ENCODE measurements at regions of chr20 and their contacts with region 1.

Region 1: DNA sequence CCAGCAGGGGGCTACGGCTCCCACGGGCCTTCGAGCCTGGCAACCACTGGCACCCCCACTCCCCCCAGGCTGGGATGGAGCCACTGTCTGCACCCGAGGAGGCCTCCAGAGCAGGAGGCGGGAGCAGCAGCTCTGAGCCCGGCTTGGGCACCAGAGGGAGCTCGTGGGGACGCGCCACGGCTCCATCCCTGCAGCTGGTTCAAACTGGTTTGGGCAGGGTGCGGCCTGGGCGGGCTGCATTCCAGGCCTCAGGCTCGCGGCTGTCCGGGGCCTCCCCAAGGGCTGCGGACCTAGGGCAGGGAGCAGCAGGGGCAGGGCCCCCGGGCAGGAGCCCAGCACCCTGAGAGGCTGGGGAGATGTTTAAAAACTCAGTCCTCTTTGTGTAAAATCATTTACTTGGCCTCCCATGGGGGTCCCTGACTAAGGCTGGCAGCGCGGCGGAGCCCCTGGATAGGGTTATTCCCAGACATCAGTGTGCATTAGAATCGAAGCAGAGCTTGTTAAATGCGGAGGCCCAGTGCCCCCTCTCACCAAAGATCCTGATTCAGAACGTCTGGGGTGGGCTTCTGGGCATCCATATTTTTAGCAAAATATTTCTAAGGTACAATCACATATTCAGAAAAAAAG is 4.1 kb upstream of the BCAS4 start:
- DNase-seq: peak; percentile 78 to 93
- H3K4me3 ChIP-seq: peak overlapping the region in 2 of 4 experiments; percentile 1 to 29; a peak in 2 of 8 replicates
- H3K27ac ChIP-seq: 0 out of 2 replicates have a peak overlapping the region, but pooled peaks have one; percentile 32
- H3K4me1 ChIP-seq: peaks cover 2 to 4% (median 3%) of the 10 kb centered on the region in 4 experiments; a peak in 5 of 7 replicates
- H3K27me3 ChIP-seq: no peaks in the 10 kb centered on the region; a peak in 1 of 7 replicates
- CTCF ChIP-seq: peak; percentile 69 to 84 (median 82)
- EP300 ChIP-seq: peak in 1 of 2 experiments; percentile 85; a peak in 1 of 3 replicates
- POLR2A ChIP-seq: peak in 1 of 2 experiments; percentile 74; a peak in 2 of 3 replicates
- RAD21 ChIP-seq: peak; percentile 28 to 54

Region 2: DNA sequence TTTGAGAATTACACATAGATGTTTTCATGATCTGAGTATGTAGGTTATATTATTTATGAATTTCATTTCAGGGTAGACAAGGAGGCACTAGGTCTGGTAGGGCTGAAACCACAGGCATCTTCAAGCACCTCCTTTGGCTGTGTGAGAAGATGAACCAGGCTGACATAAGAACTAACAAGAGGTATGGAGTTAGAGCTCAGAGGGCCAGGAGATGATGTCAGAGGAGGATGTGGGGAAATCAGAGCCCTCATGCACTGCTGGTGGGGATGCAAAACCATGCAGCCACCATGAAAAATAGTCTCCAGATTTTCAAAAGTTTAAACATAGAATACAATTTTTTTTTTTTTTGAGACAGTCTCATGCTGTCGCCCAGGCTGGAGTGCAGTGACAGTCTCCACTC is 85.8 kb before region 1 on chr20:
- CTCF ChIA-PET with region 1: no interaction called
- POLR2A ChIA-PET with region 1: no interaction called
- DNase-seq: no peak
- H3K4me3 ChIP-seq: no peak overlapping the region
- H3K27ac ChIP-seq: no peak overlapping the region
- H3K4me1 ChIP-seq: peaks cover 0 to 2% (median 1%) of the 10 kb centered on the region in 4 experiments; a peak in 2 of 7 replicates
- H3K27me3 ChIP-seq: no peaks in the 10 kb centered on the region
- CTCF ChIP-seq: no peak
- EP300 ChIP-seq: no peak
- POLR2A ChIP-seq: no peak
- RAD21 ChIP-seq: no peak

Region 3: GRCh38 chr20:50744143-50744792 is 46.5 kb before region 1 on chr20:
- CTCF ChIA-PET with region 1: interaction called, 68 read pairs
- POLR2A ChIA-PET with region 1: no interaction called
- DNase-seq: peak in 1 of 2 experiments; percentile 46
- H3K4me3 ChIP-seq: no peak overlapping the region
- H3K27ac ChIP-seq: 0 out of 2 replicates have a peak overlapping the region, but pooled peaks have one; percentile 45
- H3K4me1 ChIP-seq: peaks cover 2 to 8% (median 5%) of the 10 kb centered on the region in 4 experiments; a peak in 4 of 7 replicates
- H3K27me3 ChIP-seq: no peaks in the 10 kb centered on the region
- CTCF ChIP-seq: 0 out of 4 replicates have a peak, but pooled peaks of 1 of the 3 experiments have one; percentile 9
- EP300 ChIP-seq: no peak
- POLR2A ChIP-seq: no peak
- RAD21 ChIP-seq: peak; percentile 23 to 45; a peak in 2 of 4 replicates

Region 4: GRCh38 chr20:50776122-50776817 is 14.5 kb before region 1 on chr20:
- CTCF ChIA-PET with region 1: interaction called, 16 read pairs
- POLR2A ChIA-PET with region 1: interaction called, 4 read pairs
- DNase-seq: no peak
- H3K4me3 ChIP-seq: no peak overlapping the region
- H3K27ac ChIP-seq: no peak overlapping the region
- H3K4me1 ChIP-seq: peaks cover 0 to under 1% (median 0%) of the 10 kb centered on the region in 4 experiments; a peak in 1 of 7 replicates
- H3K27me3 ChIP-seq: no peaks in the 10 kb centered on the region
- CTCF ChIP-seq: no peak; a peak in 1 of 4 replicates
- EP300 ChIP-seq: no peak
- POLR2A ChIP-seq: no peak
- RAD21 ChIP-seq: no peak

Region 5: GRCh38 chr20:50848341-50848808 is 57.6 kb after region 1 on chr20:
- CTCF ChIA-PET with region 1: interaction called, 15 read pairs
- POLR2A ChIA-PET with region 1: no interaction called
- DNase-seq: no peak
- H3K4me3 ChIP-seq: no peak overlapping the region
- H3K27ac ChIP-seq: no peak overlapping the region
- H3K4me1 ChIP-seq: peaks cover 2 to 19% (median 14%) of the 10 kb centered on the region in 4 experiments
- H3K27me3 ChIP-seq: no peaks in the 10 kb centered on the region
- CTCF ChIP-seq: no peak
- EP300 ChIP-seq: no peak
- POLR2A ChIP-seq: no peak
- RAD21 ChIP-seq: no peak

Region 6: DNA sequence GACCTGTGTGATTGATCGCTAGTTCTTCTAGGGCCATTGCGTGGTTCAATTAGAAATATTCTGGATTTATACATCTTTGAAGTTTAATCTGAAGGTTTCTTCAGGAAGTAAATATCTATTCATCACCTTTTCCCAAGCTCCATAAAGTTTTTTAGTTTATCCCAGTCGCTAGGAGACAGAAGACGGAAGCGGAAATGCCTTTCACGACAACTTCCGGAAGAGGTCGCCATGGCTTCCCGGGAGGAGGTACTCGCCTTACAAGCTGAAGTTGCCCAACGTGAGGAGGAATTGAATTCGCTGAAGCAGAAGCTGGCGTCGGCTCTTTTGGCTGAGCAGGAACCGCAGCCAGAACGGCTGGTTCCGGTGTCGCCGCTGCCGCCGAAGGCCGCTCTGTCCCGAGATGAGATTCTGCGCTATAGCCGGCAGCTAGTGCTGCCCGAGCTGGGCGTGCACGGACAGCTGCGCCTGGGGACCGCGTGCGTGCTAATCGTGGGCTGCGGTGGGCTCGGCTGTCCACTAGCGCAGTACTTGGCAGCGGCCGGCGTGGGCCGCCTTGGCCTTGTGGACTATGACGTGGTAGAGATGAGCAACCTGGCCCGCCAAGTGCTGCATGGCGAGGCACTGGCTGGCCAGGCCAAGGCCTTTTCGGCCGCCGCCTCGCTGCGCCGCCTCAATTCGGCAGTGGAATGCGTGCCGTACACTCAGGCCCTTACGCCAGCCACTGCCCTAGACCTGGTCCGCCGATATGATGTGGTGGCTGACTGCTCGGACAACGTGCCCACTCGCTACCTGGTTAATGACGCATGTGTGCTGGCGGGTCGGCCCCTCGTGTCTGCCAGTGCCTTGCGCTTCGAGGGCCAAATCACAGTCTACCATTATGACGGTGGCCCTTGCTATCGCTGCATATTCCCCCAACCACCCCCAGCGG is 168.1 kb after region 1 on chr20 and contains the start of gene MOCS3:
- CTCF ChIA-PET with region 1: interaction called, 4 read pairs
- POLR2A ChIA-PET with region 1: interaction called, 13 read pairs
- DNase-seq: peak; percentile 38 to 78
- H3K4me3 ChIP-seq: peak within 1 kb of the TSS; percentile 77 to 99 (median 94)
- H3K27ac ChIP-seq: peak within 1 kb of the TSS; percentile 98
- H3K4me1 ChIP-seq: peaks cover 4 to 8% (median 6%) of the 10 kb centered on the region in 4 experiments
- H3K27me3 ChIP-seq: no peaks in the 10 kb centered on the region
- CTCF ChIP-seq: no peak
- EP300 ChIP-seq: peak in 1 of 2 experiments; percentile 98; a peak in 2 of 3 replicates
- POLR2A ChIP-seq: no peak
- RAD21 ChIP-seq: no peak
- total RNA-seq, gene MOCS3: 6.1 and 6.3 TPM in 2 replicates

Measured in H1 (cell line).